ENCODE measurements at regions of chr2 and their contacts with region 1.

Region 1: GRCh38 chr2:162233197-162233596 is 10.0 kb downstream of the FAP start:
- H3K4me3 Mint-ChIP-seq: no peak overlapping the region
- H3K27ac Mint-ChIP-seq: no peak overlapping the region
- H3K4me1 Mint-ChIP-seq: peaks cover 6% of the 10 kb centered on the region
- H3K27me3 Mint-ChIP-seq: no peaks in the 10 kb centered on the region

Region 2: DNA sequence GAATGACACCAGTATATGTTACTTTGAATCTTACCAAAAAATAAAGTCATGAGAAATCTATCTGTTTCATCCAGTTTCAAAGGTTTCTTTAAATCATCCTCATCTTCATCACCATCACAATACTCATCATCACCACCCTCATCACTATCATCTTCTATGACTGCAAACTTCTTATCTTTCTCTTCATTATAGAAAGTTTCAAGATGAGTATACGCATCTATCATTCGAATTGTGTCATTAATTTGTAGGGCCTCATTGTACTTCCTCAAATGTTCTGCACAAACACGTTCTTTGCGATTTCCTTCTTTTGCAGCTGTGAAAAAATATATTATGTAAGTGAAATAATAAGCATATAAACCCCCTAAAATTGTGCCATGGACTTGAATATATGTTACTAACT is 44.2 kb after region 1 on chr2:
- intact Hi-C with region 1: loop called (anchors 5 kb)
- H3K4me3 Mint-ChIP-seq: no peak overlapping the region
- H3K27ac Mint-ChIP-seq: peak overlapping the region; percentile 5
- H3K4me1 Mint-ChIP-seq: peaks cover 9% of the 10 kb centered on the region
- H3K27me3 Mint-ChIP-seq: no peaks in the 10 kb centered on the region

Measured in dendritic cell treated with granulocyte-macrophage colony-stimulating factor and Interleukin-4, amounts not matched to agents 40 ng/mL and 50 ng/mL, for 4 days (primary cell).